ENCODE measurements at regions of chr12 and their contacts with region 1.

Region 1: GRCh38 chr12:121005346-121005815 is 10.9 kb downstream of the C12orf43 start:
- H3K4me3 Mint-ChIP-seq: no peak overlapping the region
- H3K27ac Mint-ChIP-seq: peak overlapping the region; percentile 15
- H3K4me1 Mint-ChIP-seq: no peaks in the 10 kb centered on the region
- H3K27me3 Mint-ChIP-seq: no peaks in the 10 kb centered on the region

Region 2: GRCh38 chr12:121230538-121230907 is 225.1 kb after region 1 on chr12:
- intact Hi-C with region 1: loop called (anchors 1 kb)
- H3K4me3 Mint-ChIP-seq: no peak overlapping the region
- H3K27ac Mint-ChIP-seq: no peak overlapping the region
- H3K4me1 Mint-ChIP-seq: no peaks in the 10 kb centered on the region
- H3K27me3 Mint-ChIP-seq: no peaks in the 10 kb centered on the region

Measured in dendritic cell treated with granulocyte-macrophage colony-stimulating factor and Interleukin-4, amounts not matched to agents 40 ng/mL and 50 ng/mL, for 4 days (primary cell).